Transverse colon (tissue), 4 donors: ENCODE measurements at regions of chr9 and their contacts with region 1.

Region 1: GRCh38 chr9:15306757-15307534 is at the start of gene TTC39B:
- DNase-seq: peak; percentile 96
- H3K4me3 ChIP-seq: peak within 1 kb of the TSS; percentile 78 to 95 (median 86)
- H3K27ac ChIP-seq: peak within 1 kb of the TSS; percentile 89 to 95 (median 93)
- H3K4me1 ChIP-seq: peaks cover 7 to 23% (median 15%) of the 10 kb centered on the region in 4 donors
- H3K27me3 ChIP-seq: no peaks in the 10 kb centered on the region
- CTCF ChIP-seq: no peak
- EP300 ChIP-seq: no peak
- POLR2A ChIP-seq: peak; percentile 95
- total RNA-seq, gene TTC39B: 23.3 to 62.8 (median 38.1) TPM

Region 2: DNA sequence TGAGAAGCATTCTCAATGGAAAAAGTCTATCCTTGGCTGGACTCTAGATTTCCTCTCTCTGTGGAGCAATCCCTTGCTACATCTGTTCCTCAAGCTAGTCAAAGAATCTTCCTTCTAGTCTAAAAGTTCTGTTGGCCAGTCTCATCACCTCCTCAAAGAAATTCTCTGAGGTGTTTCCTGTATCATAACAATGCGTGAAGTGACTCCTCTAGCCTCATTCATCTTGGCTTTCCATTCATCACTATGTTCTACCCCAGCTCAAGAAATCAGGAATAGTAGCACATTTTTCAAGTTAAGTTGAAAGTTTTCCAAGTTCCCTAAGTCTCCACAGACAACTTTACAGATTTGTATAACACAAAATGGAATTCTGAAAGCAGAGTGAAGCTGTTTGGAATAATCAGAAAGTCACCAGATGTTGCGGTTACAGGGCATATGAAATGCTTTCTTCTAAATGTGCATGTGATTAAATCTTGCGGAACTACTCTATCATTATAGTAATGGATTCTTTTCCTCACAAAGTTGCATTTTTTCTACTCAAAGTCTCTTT is 220.1 kb before region 1 on chr9:
- in situ Hi-C with region 1: no loop called
- intact Hi-C with region 1: no loop called
- DNase-seq: no peak
- H3K4me3 ChIP-seq: no peak overlapping the region
- H3K27ac ChIP-seq: no peak overlapping the region
- H3K4me1 ChIP-seq: no peaks in the 10 kb centered on the region
- H3K27me3 ChIP-seq: no peaks in the 10 kb centered on the region
- CTCF ChIP-seq: no peak
- EP300 ChIP-seq: no peak
- POLR2A ChIP-seq: no peak

Region 3: GRCh38 chr9:15422372-15423230 is 115.7 kb after region 1 on chr9 and contains the start of gene SNAPC3:
- in situ Hi-C with region 1: loop called in 1 of 4 experiments (anchors 25 kb)
- intact Hi-C with region 1: no loop called
- DNase-seq: peak; percentile 97
- H3K4me3 ChIP-seq: peak within 1 kb of the TSS; percentile 72 to 94 (median 88)
- H3K27ac ChIP-seq: peak within 1 kb of the TSS; percentile 88 to 94 (median 91)
- H3K4me1 ChIP-seq: peaks cover 18 to 50% (median 38%) of the 10 kb centered on the region in 4 donors
- H3K27me3 ChIP-seq: no peaks in the 10 kb centered on the region
- CTCF ChIP-seq: peak in 2 of 5 experiments; percentile 49 to 50
- EP300 ChIP-seq: peak; percentile 87
- POLR2A ChIP-seq: peak; percentile 89
- total RNA-seq, gene SNAPC3: 44.9 to 70.7 (median 52.5) TPM

Region 4: GRCh38 chr9:16715404-16715803 is 1408.5 kb after region 1 on chr9:
- in situ Hi-C with region 1: no loop called
- intact Hi-C with region 1: loop called (anchors 10 kb)
- DNase-seq: no peak
- H3K4me3 ChIP-seq: no peak overlapping the region
- H3K27ac ChIP-seq: no peak overlapping the region
- H3K4me1 ChIP-seq: peaks cover 0 to 3% (median 0%) of the 10 kb centered on the region in 4 donors
- H3K27me3 ChIP-seq: no peaks in the 10 kb centered on the region
- CTCF ChIP-seq: no peak
- EP300 ChIP-seq: no peak
- POLR2A ChIP-seq: no peak